ENCODE measurements at regions of chr19 and their contacts with region 1.

Region 1: DNA sequence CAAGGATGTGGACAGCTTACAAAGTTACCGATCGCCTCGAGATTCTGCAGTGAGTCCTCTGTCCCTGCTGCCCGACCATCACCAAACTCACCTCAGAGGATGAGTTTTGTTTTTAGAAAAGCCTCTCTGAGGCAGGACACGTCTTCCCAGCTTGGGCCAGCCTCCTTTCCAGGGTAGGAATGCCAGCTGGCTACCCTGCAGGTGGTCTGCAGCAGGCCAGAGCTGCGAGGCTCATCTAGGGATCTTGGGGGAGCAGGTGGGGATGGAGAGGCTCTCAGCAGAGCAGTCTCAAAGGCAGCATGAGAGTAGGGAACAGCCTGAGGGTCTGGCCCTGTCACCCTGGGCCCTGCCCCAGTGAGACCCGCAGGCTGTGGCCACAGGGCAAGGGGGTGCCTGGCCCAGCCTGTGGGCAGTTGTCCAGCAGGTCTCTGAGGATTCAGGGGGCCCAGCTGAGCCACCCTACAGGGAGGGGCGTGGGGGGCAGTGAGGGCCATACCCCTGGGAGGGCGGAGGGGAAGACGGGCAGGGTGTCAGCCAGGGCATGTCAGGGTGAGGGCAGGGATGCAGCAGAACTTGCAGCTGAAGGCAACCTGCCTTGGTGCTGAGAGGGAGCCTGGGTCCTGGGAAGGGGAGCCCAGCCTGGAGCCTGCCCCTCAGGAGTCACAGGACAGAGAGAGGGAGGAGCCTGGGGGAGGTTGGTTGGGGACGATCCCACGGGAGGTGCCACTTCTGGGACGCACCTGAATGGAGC is 57.3 kb upstream of the TPM4 start:
- DNase-seq: peak in 1 of 2 donors; percentile 65
- H3K4me3 ChIP-seq: no peak overlapping the region
- CTCF ChIP-seq: no peak
- POLR2A ChIP-seq: no peak

Region 2: GRCh38 chr19:15276636-15277215 is 742.2 kb before region 1 on chr19:
- intact Hi-C with region 1: loop called (anchors 5 kb)
- DNase-seq: no peak
- H3K4me3 ChIP-seq: no peak overlapping the region
- CTCF ChIP-seq: no peak
- POLR2A ChIP-seq: no peak

Region 3: GRCh38 chr19:16118489-16119033 is 99.6 kb after region 1 on chr19:
- intact Hi-C with region 1: no loop called
- DNase-seq: peak in 1 of 2 donors; percentile 87
- H3K4me3 ChIP-seq: no peak overlapping the region
- CTCF ChIP-seq: no peak
- POLR2A ChIP-seq: no peak

Region 4: DNA sequence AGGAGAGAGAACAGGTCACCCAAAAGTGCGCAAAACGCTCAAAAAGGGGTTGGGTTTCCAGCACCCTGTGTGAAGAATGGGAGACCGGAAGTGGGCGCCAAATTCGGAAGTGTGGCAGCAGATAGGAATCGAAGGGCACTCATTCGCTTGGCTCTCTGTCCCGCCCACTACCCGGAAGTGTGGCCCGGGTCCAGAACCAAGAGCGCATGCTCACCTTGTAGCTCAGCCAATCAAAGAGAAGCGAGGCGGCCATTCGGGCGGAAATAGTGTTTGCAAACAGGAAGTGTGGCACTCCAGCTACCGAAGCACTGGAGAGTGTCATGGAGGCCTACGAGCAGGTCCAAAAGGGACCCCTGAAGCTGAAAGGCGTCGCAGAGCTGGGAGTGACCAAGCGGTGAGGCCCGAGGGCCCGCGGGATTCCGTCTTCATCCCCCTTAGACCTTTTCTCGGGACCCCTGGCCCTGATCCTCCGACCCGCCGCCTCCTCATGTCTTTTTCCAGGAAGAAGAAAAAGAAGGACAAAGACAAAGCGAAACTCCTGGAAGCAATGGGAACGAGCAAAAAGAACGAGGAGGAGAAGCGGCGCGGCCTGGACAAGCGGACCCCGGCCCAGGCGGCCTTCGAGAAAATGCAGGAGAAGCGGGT is 166.3 kb after region 1 on chr19 and contains the start of gene FAM32A:
- intact Hi-C with region 1: no loop called
- DNase-seq: peak; percentile 100
- H3K4me3 ChIP-seq: peak within 1 kb of the TSS; percentile 60
- CTCF ChIP-seq: no peak
- POLR2A ChIP-seq: no peak
- total RNA-seq, gene FAM32A: 95.3 to 114 (median 105) TPM